ENCODE measurements at regions of chr1 and their contacts with region 1.

Region 1: GRCh38 chr1:243587823-243588560 is 262.1 kb downstream of the AKT3 start:
- DNase-seq: no peak
- H3K4me3 Mint-ChIP-seq: peak overlapping the region; percentile 32
- H3K27ac Mint-ChIP-seq: peak overlapping the region; percentile 75
- H3K4me1 Mint-ChIP-seq: peaks cover 43% of the 10 kb centered on the region
- H3K27me3 Mint-ChIP-seq: no peaks in the 10 kb centered on the region

Region 2: GRCh38 chr1:243354511-243355153 is 233.4 kb before region 1 on chr1:
- intact Hi-C with region 1: loop called (anchors 5 kb)
- DNase-seq: no peak
- H3K4me3 Mint-ChIP-seq: peak overlapping the region; percentile 46
- H3K27ac Mint-ChIP-seq: no peak overlapping the region
- H3K4me1 Mint-ChIP-seq: peaks cover 11% of the 10 kb centered on the region
- H3K27me3 Mint-ChIP-seq: no peaks in the 10 kb centered on the region

Region 3: GRCh38 chr1:243397613-243398321 is 190.2 kb before region 1 on chr1:
- intact Hi-C with region 1: no loop called
- DNase-seq: no peak
- H3K4me3 Mint-ChIP-seq: no peak overlapping the region
- H3K27ac Mint-ChIP-seq: no peak overlapping the region
- H3K4me1 Mint-ChIP-seq: peaks cover 2% of the 10 kb centered on the region
- H3K27me3 Mint-ChIP-seq: no peaks in the 10 kb centered on the region

Region 4: DNA sequence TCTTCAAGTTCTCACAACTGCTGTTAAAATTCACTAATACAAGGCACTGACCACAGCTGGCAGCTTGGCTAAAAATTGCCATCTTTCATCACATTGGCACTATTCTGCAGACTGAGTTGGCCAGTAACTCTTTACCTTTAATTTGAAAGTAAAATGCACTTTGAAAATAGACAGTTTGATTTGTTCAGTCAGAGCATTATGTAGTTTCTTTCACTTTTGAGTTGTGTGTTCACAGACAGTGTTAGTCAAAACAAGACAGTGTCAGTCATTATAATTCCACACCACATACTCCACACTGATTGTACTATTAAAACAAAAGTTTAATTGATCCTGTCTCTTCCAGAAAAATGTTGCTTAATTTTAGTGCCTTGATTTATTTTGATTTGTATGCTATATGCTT is 171.5 kb before region 1 on chr1:
- intact Hi-C with region 1: loop called (anchors 1 kb)
- DNase-seq: no peak
- H3K4me3 Mint-ChIP-seq: peak overlapping the region; percentile 40
- H3K27ac Mint-ChIP-seq: peak overlapping the region; percentile 65
- H3K4me1 Mint-ChIP-seq: peaks cover 63% of the 10 kb centered on the region
- H3K27me3 Mint-ChIP-seq: no peaks in the 10 kb centered on the region